Tibial artery (tissue), 4 donors: ENCODE measurements at regions of chr13 and their contacts with region 1.

Region 1: DNA sequence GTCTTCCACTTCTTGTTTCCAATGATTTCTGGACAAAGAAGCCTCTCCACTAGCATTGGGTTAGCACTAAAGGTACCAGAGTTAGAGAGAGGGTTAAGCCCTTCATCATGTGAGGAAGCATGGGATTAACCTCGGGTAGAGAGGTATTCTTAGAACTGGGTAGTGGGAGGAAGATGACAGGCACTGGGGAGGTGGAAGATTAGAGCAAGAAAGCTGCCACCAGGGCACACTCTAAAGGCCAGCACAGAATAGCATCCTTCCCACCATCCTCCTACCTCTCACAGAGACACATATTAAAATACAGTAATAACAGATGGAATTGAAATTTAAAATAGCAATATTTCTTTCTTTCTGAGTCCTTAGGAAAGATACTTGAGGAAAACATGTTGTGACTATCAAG is 84.5 kb upstream of the PCDH20 start:
- DNase-seq: no peak
- H3K4me3 ChIP-seq: no peak overlapping the region
- H3K27ac ChIP-seq: no peak overlapping the region
- H3K4me1 ChIP-seq: no peaks in the 10 kb centered on the region
- H3K27me3 ChIP-seq: no peaks in the 10 kb centered on the region
- CTCF ChIP-seq: no peak

Region 2: GRCh38 chr13:61486496-61486895 is 13.7 kb before region 1 on chr13:
- intact Hi-C with region 1: loop called (anchors 1 kb)
- DNase-seq: no peak
- H3K4me3 ChIP-seq: no peak overlapping the region
- H3K27ac ChIP-seq: no peak overlapping the region
- H3K4me1 ChIP-seq: no peaks in the 10 kb centered on the region
- H3K27me3 ChIP-seq: no peaks in the 10 kb centered on the region
- CTCF ChIP-seq: no peak